ENCODE measurements at regions of chr7 and their contacts with region 1.

Region 1: GRCh38 chr7:78232806-78233205 is 434.2 kb downstream of the PHTF2 start:
- DNase-seq: no peak
- ATAC-seq: no peak
- H3K4me3 ChIP-seq: no peak overlapping the region
- H3K27ac ChIP-seq: no peak overlapping the region
- H3K4me1 ChIP-seq: no peaks in the 10 kb centered on the region
- H3K27me3 ChIP-seq: peaks cover 7% of the 10 kb centered on the region; the same call in 1 of the 2 replicates
- CTCF ChIP-seq: no peak
- POLR2A ChIP-seq: no peak
- RAD21 ChIP-seq: no peak

Region 2: GRCh38 chr7:77570330-77571011 is 662.3 kb before region 1 on chr7:
- CTCF ChIA-PET with region 1: no interaction called
- POLR2A ChIA-PET with region 1: no interaction called
- RAD21 ChIA-PET with region 1: no interaction called
- intact Hi-C with region 1: no loop called
- DNase-seq: no peak
- ATAC-seq: no peak
- H3K4me3 ChIP-seq: no peak overlapping the region
- H3K27ac ChIP-seq: no peak overlapping the region
- H3K4me1 ChIP-seq: no peaks in the 10 kb centered on the region
- H3K27me3 ChIP-seq: no peaks in the 10 kb centered on the region
- CTCF ChIP-seq: no peak
- POLR2A ChIP-seq: no peak
- RAD21 ChIP-seq: no peak

Region 3: GRCh38 chr7:78134256-78134655 is 98.5 kb before region 1 on chr7:
- CTCF ChIA-PET with region 1: no interaction called
- POLR2A ChIA-PET with region 1: no interaction called
- RAD21 ChIA-PET with region 1: no interaction called
- intact Hi-C with region 1: loop called (anchors 2 kb)
- DNase-seq: peak; percentile 19
- ATAC-seq: peak; percentile 73
- H3K4me3 ChIP-seq: no peak overlapping the region
- H3K27ac ChIP-seq: no peak overlapping the region
- H3K4me1 ChIP-seq: no peaks in the 10 kb centered on the region
- H3K27me3 ChIP-seq: peaks cover 21% of the 10 kb centered on the region
- CTCF ChIP-seq: peak; percentile 32 to 66 (median 51); a peak in 5 of 6 replicates
- POLR2A ChIP-seq: no peak
- RAD21 ChIP-seq: peak; percentile 62